ENCODE measurements at regions of chr1 and their contacts with region 1.

Region 1: GRCh38 chr1:157580179-157580827 is 17.6 kb downstream of the FCRL4 start:
- DNase-seq: peak in 1 of 2 experiments; percentile 53
- H3K4me3 ChIP-seq: no peak overlapping the region
- H3K27ac ChIP-seq: no peak overlapping the region
- H3K4me1 ChIP-seq: no peaks in the 10 kb centered on the region
- H3K27me3 ChIP-seq: no peaks in the 10 kb centered on the region
- CTCF ChIP-seq: peak in 2 of 3 experiments; percentile 75 to 82; a peak in 3 of 4 replicates
- EP300 ChIP-seq: no peak
- POLR2A ChIP-seq: no peak
- RAD21 ChIP-seq: peak; percentile 71 to 78

Region 2: DNA sequence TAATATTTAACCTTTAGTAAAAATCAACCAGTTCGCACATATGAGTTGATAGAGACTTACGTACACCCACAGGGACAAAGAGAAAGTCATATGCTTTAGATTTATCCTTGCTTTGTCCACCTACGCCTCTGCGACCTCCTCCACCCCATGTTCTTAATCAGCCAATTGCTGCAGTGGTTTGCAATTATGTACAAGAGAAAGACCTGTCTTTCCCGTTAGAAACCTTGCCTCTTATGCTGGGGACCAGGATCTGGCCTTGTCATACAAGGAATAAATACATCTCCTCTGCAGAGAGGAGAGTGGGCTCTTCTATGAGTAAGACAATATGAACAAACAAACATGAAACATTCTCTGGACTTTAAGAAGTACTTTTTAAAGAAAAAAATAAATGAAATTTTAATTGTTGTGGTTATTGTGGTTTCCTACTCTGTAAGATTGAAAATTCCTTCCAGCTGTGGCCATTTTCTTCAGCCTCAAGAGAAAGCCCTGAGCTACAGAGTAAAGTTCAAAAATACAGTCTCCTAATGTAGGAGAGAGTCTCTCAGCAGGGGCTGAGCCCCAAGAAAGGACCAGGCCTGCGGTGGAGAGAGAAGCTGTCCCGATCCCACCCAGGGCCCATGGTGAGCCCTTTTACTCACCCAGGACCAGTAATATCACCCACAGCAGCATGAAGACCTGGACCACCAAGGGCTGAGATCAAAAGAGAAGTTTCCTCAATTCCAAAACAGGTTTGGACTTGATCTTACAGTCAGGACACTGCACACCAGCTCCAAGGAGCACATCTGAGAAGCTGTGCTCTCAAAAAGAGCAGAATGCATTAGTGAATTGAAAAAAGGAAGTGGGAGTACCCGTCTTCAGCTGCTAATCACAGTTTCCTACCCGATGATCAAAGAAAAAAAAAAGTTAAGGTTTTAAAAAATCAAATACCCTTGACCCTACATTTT is 28.3 kb before region 1 on chr1 and contains the start of gene FCRL5:
- CTCF ChIA-PET with region 1: interaction called, 10 read pairs
- POLR2A ChIA-PET with region 1: no interaction called
- DNase-seq: no peak
- H3K4me3 ChIP-seq: no peak within 1 kb of the TSS
- H3K27ac ChIP-seq: no peak within 1 kb of the TSS
- H3K4me1 ChIP-seq: no peaks in the 10 kb centered on the region
- H3K27me3 ChIP-seq: no peaks in the 10 kb centered on the region
- CTCF ChIP-seq: no peak
- EP300 ChIP-seq: no peak
- POLR2A ChIP-seq: no peak
- RAD21 ChIP-seq: no peak
- total RNA-seq, gene FCRL5: 1.0 and 1.1 TPM in 2 replicates

Region 3: GRCh38 chr1:157595356-157595755 is 15.1 kb after region 1 on chr1:
- CTCF ChIA-PET with region 1: interaction called, 20 read pairs
- POLR2A ChIA-PET with region 1: interaction called, 4 read pairs
- DNase-seq: no peak
- H3K4me3 ChIP-seq: no peak overlapping the region
- H3K27ac ChIP-seq: no peak overlapping the region
- H3K4me1 ChIP-seq: no peaks in the 10 kb centered on the region
- H3K27me3 ChIP-seq: no peaks in the 10 kb centered on the region
- CTCF ChIP-seq: no peak
- EP300 ChIP-seq: no peak
- POLR2A ChIP-seq: no peak
- RAD21 ChIP-seq: no peak

Region 4: DNA sequence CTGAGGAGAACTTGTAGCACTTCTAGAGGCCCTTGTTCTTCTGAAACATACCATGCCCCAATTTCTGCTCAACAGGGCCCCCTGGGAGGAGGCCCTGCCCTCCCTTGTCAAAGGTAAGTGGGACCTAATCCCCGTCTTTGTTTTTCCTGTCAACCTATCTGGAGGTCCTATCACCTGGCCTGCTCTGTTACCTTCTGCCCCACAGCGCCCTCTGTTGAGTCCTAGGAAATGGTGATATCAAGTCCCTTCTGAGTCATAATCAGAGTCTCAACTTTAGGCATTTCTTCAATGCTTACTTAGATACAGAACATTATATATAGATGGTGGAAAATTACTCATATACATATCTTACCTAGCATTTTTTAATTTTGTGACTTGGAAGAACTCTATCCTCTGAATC is 45.8 kb after region 1 on chr1:
- CTCF ChIA-PET with region 1: interaction called, 34 read pairs
- POLR2A ChIA-PET with region 1: no interaction called
- DNase-seq: peak; percentile 21 to 68
- H3K4me3 ChIP-seq: no peak overlapping the region
- H3K27ac ChIP-seq: no peak overlapping the region
- H3K4me1 ChIP-seq: no peaks in the 10 kb centered on the region; a peak in 1 of 7 replicates
- H3K27me3 ChIP-seq: no peaks in the 10 kb centered on the region
- CTCF ChIP-seq: peak; percentile 51 to 77 (median 72)
- EP300 ChIP-seq: no peak
- POLR2A ChIP-seq: no peak
- RAD21 ChIP-seq: peak; percentile 69 to 78

Region 5: DNA sequence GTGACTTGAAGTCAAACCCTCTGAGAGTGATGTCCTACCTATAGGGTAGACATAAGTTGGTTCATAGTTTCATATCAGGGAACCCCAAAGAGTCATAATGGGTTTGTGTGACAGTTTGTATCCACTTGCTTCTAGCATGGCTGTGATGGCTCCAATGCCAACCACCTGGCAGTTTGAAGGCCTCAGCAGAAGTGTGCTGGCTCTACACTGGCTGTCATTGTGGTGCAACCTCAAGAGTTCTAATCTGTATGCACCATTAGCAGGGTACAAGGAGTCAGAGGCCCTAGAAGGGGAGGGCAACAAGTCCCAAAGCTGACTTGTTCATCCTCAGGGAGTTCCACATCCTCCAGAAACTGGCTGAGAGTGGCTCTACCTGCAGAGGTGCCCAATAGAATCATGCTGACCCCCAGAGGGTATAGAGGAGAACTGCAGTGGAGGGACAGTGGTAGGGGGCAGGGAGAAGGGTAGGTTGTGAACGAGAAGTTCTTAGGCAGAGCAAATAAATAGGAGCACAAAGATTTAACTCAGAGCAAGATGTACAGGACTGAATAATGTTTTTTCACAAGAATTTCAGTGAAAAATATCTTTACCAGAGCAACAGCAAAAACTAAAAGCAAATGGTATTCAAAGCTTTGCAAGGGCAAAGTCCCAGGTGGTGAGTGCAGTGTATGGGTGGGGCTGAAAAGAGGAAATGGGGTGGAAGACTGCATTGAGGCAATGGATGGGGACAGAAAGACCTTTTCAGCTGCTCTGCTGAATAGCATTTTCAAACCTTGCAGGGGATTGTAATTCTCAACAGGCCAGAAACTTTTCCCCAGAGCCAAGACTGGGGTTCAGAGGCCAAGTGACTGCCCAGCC is 193.4 kb after region 1 on chr1:
- CTCF ChIA-PET with region 1: interaction called, 11 read pairs
- POLR2A ChIA-PET with region 1: no interaction called
- DNase-seq: peak in 1 of 2 experiments; percentile 29
- H3K4me3 ChIP-seq: no peak overlapping the region
- H3K27ac ChIP-seq: no peak overlapping the region
- H3K4me1 ChIP-seq: no peaks in the 10 kb centered on the region
- H3K27me3 ChIP-seq: no peaks in the 10 kb centered on the region; a peak in 1 of 7 replicates
- CTCF ChIP-seq: peak; percentile 70 to 83 (median 79)
- EP300 ChIP-seq: no peak
- POLR2A ChIP-seq: no peak
- RAD21 ChIP-seq: peak; percentile 85 to 89

Region 6: GRCh38 chr1:157862114-157863070 is 282.1 kb after region 1 on chr1:
- CTCF ChIA-PET with region 1: no interaction called
- POLR2A ChIA-PET with region 1: no interaction called
- DNase-seq: no peak
- H3K4me3 ChIP-seq: no peak overlapping the region
- H3K27ac ChIP-seq: no peak overlapping the region
- H3K4me1 ChIP-seq: no peaks in the 10 kb centered on the region
- H3K27me3 ChIP-seq: no peaks in the 10 kb centered on the region
- CTCF ChIP-seq: no peak
- EP300 ChIP-seq: no peak
- POLR2A ChIP-seq: no peak
- RAD21 ChIP-seq: no peak

Measured in H1 (cell line).